ENCODE measurements at regions of chr4 and their contacts with region 1.

Region 1: GRCh38 chr4:166594326-166594946 is 639.9 kb downstream of the SPOCK3 start:
- DNase-seq: no peak
- H3K4me3 ChIP-seq: no peak overlapping the region
- H3K27ac ChIP-seq: no peak overlapping the region
- H3K4me1 ChIP-seq: no peaks in the 10 kb centered on the region
- H3K27me3 ChIP-seq: no peaks in the 10 kb centered on the region
- CTCF ChIP-seq: peak; percentile 66 to 69

Region 2: GRCh38 chr4:166162327-166162726 is 432.1 kb before region 1 on chr4:
- intact Hi-C with region 1: loop called (anchors 5 kb)
- DNase-seq: no peak
- H3K4me3 ChIP-seq: no peak overlapping the region
- H3K27ac ChIP-seq: no peak overlapping the region
- H3K4me1 ChIP-seq: no peaks in the 10 kb centered on the region
- H3K27me3 ChIP-seq: no peaks in the 10 kb centered on the region
- CTCF ChIP-seq: no peak

Region 3: GRCh38 chr4:166324321-166324720 is 270.1 kb before region 1 on chr4:
- intact Hi-C with region 1: loop called (anchors 10 kb)
- DNase-seq: no peak
- H3K4me3 ChIP-seq: no peak overlapping the region
- H3K27ac ChIP-seq: no peak overlapping the region
- H3K4me1 ChIP-seq: no peaks in the 10 kb centered on the region
- H3K27me3 ChIP-seq: no peaks in the 10 kb centered on the region
- CTCF ChIP-seq: peak; percentile 25 to 37

Region 4: GRCh38 chr4:166460769-166461550 is 133.5 kb before region 1 on chr4:
- intact Hi-C with region 1: no loop called
- DNase-seq: no peak
- H3K4me3 ChIP-seq: no peak overlapping the region
- H3K27ac ChIP-seq: no peak overlapping the region
- H3K4me1 ChIP-seq: peaks cover 0 to 22% (median 0%) of the 10 kb centered on the region in 4 donors
- H3K27me3 ChIP-seq: no peaks in the 10 kb centered on the region
- CTCF ChIP-seq: no peak